Left ventricle myocardium inferior (tissue), 1 donor: ENCODE measurements at regions of chr3 and their contacts with region 1.

Region 1: GRCh38 chr3:99842826-99843589 is 25.3 kb downstream of the CMSS1 start:
- DNase-seq: no peak
- H3K4me3 ChIP-seq: peak overlapping the region; percentile 1
- H3K27ac ChIP-seq: peak overlapping the region; percentile 75
- H3K4me1 ChIP-seq: peaks cover 54% of the 10 kb centered on the region
- H3K27me3 ChIP-seq: no peaks in the 10 kb centered on the region
- CTCF ChIP-seq: peak; percentile 82

Region 2: GRCh38 chr3:99648101-99648500 is 194.9 kb before region 1 on chr3:
- intact Hi-C with region 1: no loop called
- DNase-seq: no peak
- H3K4me3 ChIP-seq: no peak overlapping the region
- H3K27ac ChIP-seq: peak overlapping the region; percentile 66
- H3K4me1 ChIP-seq: peaks cover 15% of the 10 kb centered on the region
- H3K27me3 ChIP-seq: no peaks in the 10 kb centered on the region
- CTCF ChIP-seq: no peak

Region 3: DNA sequence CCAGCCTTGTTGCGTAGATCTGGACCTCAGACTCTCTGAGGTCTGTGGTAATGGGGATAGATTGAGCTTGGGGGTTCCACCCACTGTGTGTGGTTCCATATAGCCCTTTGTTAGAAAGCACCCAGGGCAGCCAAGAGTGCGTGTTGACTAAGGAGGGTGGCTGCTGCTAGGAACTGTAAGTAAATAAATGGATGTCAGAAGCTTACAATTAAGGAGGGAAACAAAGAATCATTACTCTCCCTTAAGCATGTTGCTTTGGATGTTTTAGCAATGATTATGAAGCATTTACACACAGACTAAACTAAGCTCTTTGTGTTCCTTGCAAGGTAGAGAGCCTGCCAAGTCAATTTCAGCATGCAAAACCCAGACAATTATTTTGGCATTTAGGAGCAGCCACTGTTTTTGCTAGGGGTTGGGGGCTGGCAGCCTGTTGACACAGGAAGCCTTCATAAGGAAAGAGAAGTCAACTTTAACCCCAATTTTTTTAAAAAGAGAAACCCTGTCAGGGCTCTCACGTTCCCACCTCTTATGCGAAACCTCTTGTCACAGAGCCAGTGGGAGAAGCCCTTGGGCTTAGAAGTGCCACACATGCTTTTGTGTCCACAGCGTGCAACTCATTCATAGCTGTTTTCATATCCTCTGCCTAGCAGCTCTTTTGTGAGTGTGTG is 102.5 kb after region 1 on chr3:
- intact Hi-C with region 1: loop called (anchors 10 kb)
- DNase-seq: no peak
- H3K4me3 ChIP-seq: peak overlapping the region; percentile 32
- H3K27ac ChIP-seq: peak overlapping the region; percentile 63
- H3K4me1 ChIP-seq: peaks cover 55% of the 10 kb centered on the region
- H3K27me3 ChIP-seq: no peaks in the 10 kb centered on the region
- CTCF ChIP-seq: no peak

Region 4: GRCh38 chr3:99981138-99981537 is 138.1 kb after region 1 on chr3:
- intact Hi-C with region 1: no loop called
- DNase-seq: no peak
- H3K4me3 ChIP-seq: no peak overlapping the region
- H3K27ac ChIP-seq: peak overlapping the region; percentile 67
- H3K4me1 ChIP-seq: no peaks in the 10 kb centered on the region
- H3K27me3 ChIP-seq: no peaks in the 10 kb centered on the region
- CTCF ChIP-seq: no peak

Region 5: GRCh38 chr3:100057716-100058575 is 214.9 kb after region 1 on chr3:
- intact Hi-C with region 1: loop called (anchors 5 kb)
- DNase-seq: no peak
- H3K4me3 ChIP-seq: no peak overlapping the region
- H3K27ac ChIP-seq: no peak overlapping the region
- H3K4me1 ChIP-seq: peaks cover 28% of the 10 kb centered on the region
- H3K27me3 ChIP-seq: no peaks in the 10 kb centered on the region
- CTCF ChIP-seq: peak; percentile 44

Region 6: DNA sequence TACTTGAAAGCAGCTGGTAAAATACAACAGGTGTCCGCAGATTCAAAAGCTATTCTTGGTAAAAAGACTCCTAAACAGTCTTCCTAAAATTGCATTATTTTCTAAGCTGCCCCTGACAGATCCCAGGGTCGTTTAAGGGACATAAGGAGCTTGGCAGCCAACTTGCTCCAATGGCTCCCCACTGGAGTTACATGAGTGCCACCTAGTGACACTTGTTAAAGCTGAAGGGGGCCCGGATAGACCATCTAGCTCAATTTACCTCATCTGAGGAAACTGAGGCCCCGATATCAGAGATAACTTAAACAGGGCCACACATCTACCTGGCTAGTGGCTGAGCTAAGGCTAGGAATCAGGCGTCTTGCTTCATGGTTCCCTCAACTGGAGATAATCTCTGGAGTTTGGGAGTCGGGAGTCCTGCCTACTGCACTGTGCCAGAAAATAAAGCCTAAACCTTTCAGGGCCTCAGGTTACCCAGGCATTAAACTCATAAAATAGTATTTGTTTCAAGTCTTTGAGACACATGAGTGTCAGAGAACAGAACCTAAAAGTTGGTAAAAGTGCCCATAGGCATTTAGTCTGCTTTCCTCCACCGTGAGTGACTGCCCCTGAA is 411.3 kb after region 1 on chr3:
- intact Hi-C with region 1: loop called (anchors 2 kb)
- DNase-seq: peak; percentile 29
- H3K4me3 ChIP-seq: no peak overlapping the region
- H3K27ac ChIP-seq: peak overlapping the region; percentile 50
- H3K4me1 ChIP-seq: peaks cover 21% of the 10 kb centered on the region
- H3K27me3 ChIP-seq: no peaks in the 10 kb centered on the region
- CTCF ChIP-seq: peak; percentile 95